Activated T-helper 1 cell treated with anti-CD3 and anti-CD28 coated beads, Interleukin-12 subunit alpha, Interleukin-12 subunit beta, Interleukin-2, Interleukin-4 antibody, amounts not matched to agents 30 ng/mL and 10 ng/mL and 1 ng/mL, durations not matched to agents 14 hours and 24 hours and 36 hours (primary cell): ENCODE measurements at regions of chr14 and their contacts with region 1.

Region 1: DNA sequence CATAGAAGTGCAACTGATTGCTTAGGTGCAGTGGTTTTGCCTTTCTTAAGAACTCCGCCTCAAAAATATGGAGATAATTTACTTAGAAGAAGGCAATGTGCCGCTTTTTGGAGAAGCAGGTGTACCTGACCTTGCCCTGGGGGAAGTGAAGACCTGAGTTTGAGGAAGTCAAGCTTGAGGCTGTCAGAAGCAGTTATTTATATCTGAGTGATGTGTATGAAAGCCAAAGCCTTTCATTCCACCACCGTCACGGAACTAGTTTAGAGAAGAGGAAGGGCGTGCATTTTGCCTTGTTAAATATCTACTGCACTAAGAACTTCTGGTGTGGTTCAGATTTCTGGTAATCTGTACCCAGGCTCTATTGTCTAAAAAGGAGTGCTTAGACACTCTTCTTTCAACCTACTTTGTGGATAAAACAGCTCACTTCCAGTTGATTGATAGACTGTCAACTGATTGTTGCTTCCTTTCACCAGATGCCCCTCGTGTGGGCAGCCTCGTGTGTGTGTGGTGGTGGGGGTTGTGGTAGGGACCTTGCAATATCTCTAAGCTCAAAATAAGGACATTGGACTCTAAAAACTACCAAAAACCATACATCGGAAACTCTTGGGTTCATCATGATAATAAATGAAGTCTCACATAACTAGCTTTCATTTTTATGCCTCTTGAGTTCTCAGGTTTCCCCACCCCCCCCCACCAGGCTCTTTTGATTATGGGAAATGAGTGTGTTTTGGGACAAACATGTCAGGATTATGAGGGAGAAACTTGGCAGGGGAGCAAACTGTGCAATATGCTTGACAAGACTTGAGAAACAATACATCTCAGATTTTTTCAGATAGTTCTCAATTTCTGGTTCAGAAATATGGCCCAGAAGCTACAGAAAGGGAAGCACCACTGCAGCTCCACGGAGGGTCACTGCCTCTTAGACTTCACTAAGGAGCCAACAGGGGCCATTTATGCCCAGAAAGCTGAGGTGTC is 78.6 kb downstream of the ARF6 start:
- DNase-seq: peak; percentile 48
- H3K4me3 Mint-ChIP-seq: peak overlapping the region; percentile 83
- H3K27ac Mint-ChIP-seq: peak overlapping the region; percentile 99
- H3K4me1 Mint-ChIP-seq: peaks cover 61% of the 10 kb centered on the region
- H3K27me3 Mint-ChIP-seq: no peaks in the 10 kb centered on the region

Region 2: GRCh38 chr14:49862089-49862673 is 109.3 kb before region 1 on chr14:
- intact Hi-C with region 1: loop called (anchors 1 kb)
- DNase-seq: peak; percentile 81
- H3K4me3 Mint-ChIP-seq: no peak overlapping the region
- H3K27ac Mint-ChIP-seq: no peak overlapping the region
- H3K4me1 Mint-ChIP-seq: peaks cover 10% of the 10 kb centered on the region
- H3K27me3 Mint-ChIP-seq: peaks cover 6% of the 10 kb centered on the region

Region 3: GRCh38 chr14:49959822-49960408 is 11.5 kb before region 1 on chr14:
- intact Hi-C with region 1: loop called (anchors 1 kb)
- DNase-seq: peak; percentile 17
- H3K4me3 Mint-ChIP-seq: peak overlapping the region; percentile 37
- H3K27ac Mint-ChIP-seq: peak overlapping the region; percentile 43
- H3K4me1 Mint-ChIP-seq: peaks cover 52% of the 10 kb centered on the region
- H3K27me3 Mint-ChIP-seq: no peaks in the 10 kb centered on the region

Region 4: DNA sequence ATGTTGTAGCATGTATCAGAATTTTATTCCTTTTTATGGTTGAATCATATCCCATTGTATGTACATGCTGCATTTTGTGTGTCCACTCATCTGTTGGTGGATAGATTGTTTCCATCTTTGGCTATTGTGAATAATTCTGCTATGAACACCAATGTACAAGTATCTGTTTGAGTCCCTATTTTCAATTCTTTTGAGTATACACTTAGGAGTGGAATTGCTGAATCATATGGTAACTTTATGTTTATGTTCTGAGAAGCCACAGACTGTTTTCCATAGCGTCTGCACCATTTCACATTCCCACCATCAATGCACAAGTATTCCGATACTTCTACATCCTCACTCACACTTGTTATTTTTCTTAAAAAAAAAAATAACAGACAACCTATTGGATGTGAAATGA is 13.0 kb after region 1 on chr14:
- intact Hi-C with region 1: loop called (anchors 1 kb)
- DNase-seq: no peak
- H3K4me3 Mint-ChIP-seq: no peak overlapping the region
- H3K27ac Mint-ChIP-seq: peak overlapping the region; percentile 93
- H3K4me1 Mint-ChIP-seq: peaks cover 66% of the 10 kb centered on the region
- H3K27me3 Mint-ChIP-seq: no peaks in the 10 kb centered on the region

Region 5: GRCh38 chr14:50061664-50062437 is 90.4 kb after region 1 on chr14:
- intact Hi-C with region 1: loop called (anchors 1 kb)
- DNase-seq: peak; percentile 67
- H3K4me3 Mint-ChIP-seq: peak overlapping the region; percentile 99
- H3K27ac Mint-ChIP-seq: peak overlapping the region; percentile 100
- H3K4me1 Mint-ChIP-seq: peaks cover 94% of the 10 kb centered on the region
- H3K27me3 Mint-ChIP-seq: no peaks in the 10 kb centered on the region